ENCODE measurements at regions of chr2 and their contacts with region 1.

Region 1: DNA sequence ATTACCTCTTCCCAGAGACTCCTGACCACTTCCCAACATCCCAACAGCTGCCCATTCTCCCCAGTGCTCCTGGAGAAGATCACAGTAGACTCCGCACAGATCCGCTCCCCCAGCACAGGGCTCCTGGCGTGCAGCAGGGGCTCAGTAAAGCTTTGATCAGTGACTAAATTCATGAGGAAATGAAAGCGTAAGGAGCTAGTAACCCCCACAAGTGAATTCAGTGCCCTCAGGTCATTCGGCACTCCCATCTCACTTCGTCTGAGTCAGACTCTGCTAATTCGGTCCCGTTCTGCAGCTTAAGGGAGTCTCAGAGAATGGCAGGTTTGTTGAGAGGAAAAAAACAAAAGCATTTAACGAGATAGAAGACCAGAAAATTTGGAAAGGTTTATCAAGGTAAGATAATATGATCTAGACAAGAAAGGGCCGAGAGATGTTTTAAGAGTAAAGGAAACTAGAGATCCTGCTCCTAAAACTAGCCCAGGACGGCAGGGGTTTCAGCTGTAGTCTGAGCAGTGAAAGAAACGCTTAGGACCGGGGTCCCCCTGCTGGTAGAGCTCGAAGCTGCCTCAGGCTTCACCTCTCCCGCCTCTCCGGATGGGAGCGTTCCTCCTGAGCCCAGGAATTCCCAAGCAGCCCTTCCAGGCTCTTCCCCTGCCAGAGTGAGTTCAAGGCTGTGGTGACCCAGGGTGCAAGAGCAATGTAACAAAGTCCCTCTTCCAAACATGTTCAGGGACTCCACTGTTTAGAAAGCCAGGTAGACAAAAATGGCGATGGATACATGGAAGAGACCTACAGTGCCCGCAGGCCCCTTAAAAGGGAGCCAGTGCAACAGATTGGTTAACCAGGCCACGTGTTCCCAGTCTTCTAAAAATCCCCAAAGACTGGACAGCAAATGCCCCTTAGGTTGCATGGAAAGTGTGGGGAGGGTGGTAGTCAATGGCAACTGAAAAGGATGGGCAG is 127.3 kb downstream of the DNER start:
- DNase-seq: peak; percentile 76 to 80
- ATAC-seq: peak; percentile 93 to 97 (median 96)
- H3K4me3 ChIP-seq: peak overlapping the region in 6 of 10 donors; percentile 1 to 39 (median 36)
- H3K27ac ChIP-seq: no peak overlapping the region
- H3K4me1 ChIP-seq: peaks cover 0 to 8% (median 0%) of the 10 kb centered on the region in 9 donors
- H3K27me3 ChIP-seq: peaks cover 0 to 15% (median 0%) of the 10 kb centered on the region in 7 donors
- CTCF ChIP-seq: peak; percentile 73 to 93 (median 89)

Region 2: DNA sequence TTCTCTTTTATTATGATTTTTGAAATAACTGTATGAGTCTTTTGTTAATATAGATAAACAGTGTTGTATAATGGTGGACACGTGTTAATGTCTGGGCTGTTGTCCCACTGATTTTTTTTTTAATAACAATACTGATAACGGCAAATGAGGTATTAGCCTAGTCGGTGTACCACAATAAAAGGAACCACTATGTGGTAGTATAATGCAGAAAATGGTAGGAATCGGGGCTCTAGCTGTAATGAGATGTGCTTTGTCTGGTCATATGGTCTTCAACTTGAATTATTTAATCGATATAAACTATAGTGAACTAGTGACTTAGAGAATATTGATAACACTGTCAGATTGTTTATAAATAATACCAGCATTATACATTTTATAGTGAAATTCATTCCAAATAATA is 887.6 kb before region 1 on chr2:
- intact Hi-C with region 1: loop called in 4 of 10 experiments (anchors 5 to 10 kb)
- DNase-seq: no peak
- ATAC-seq: peak in 5 of 8 donors; percentile 52 to 80 (median 66)
- H3K4me3 ChIP-seq: no peak overlapping the region
- H3K27ac ChIP-seq: no peak overlapping the region
- H3K4me1 ChIP-seq: no peaks in the 10 kb centered on the region
- H3K27me3 ChIP-seq: no peaks in the 10 kb centered on the region
- CTCF ChIP-seq: peak in 8 of 9 donors; percentile 8 to 59 (median 42)

Region 3: DNA sequence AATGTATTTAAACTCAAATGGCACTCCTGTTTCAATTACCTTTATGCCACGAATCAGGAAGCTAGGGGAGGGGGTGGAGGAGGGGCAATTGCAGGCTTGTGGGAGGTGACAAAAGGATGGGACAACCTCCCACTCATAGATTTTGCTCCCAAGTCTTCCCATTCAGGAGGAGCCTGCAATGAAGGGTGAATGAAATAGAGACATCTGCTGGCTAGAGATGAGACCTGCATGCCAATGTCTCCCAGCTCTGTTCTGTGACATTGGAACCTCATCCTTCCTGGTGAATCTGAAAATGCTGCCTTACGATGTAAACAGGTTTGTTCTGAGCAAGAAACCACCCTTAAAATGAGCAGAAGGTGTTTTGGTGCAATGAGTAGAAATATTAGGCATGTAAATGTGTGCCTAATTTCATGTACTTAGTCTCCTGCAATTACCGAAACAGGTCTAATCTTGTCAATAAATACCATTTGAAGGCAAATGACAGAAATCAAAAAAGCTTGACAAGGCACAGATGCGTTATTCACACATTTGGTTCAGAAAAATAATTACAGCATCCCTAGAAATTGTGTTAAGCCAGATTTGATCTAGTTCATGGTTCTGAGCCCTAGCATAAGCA is 313.2 kb before region 1 on chr2:
- intact Hi-C with region 1: loop called in 2 of 10 experiments (anchors 10 kb)
- DNase-seq: peak; percentile 16 to 64
- ATAC-seq: peak; percentile 59 to 83 (median 80)
- H3K4me3 ChIP-seq: peak overlapping the region in 7 of 10 donors; percentile 23 to 44 (median 37)
- H3K27ac ChIP-seq: no peak overlapping the region
- H3K4me1 ChIP-seq: peaks cover 0 to 13% (median 3%) of the 10 kb centered on the region in 9 donors
- H3K27me3 ChIP-seq: peaks cover 0 to 37% (median 10%) of the 10 kb centered on the region in 7 donors
- CTCF ChIP-seq: peak; percentile 26 to 85 (median 77)

Region 4: GRCh38 chr2:229407170-229407569 is 179.9 kb before region 1 on chr2:
- intact Hi-C with region 1: no loop called
- DNase-seq: peak; percentile 58 to 63
- ATAC-seq: peak; percentile 78 to 94 (median 89)
- H3K4me3 ChIP-seq: no peak overlapping the region
- H3K27ac ChIP-seq: peak overlapping the region; percentile 18 to 84 (median 66)
- H3K4me1 ChIP-seq: peaks cover 0 to 38% (median 21%) of the 10 kb centered on the region in 9 donors
- H3K27me3 ChIP-seq: no peaks in the 10 kb centered on the region
- CTCF ChIP-seq: no peak

Region 5: GRCh38 chr2:229425598-229425997 is 161.4 kb before region 1 on chr2:
- intact Hi-C with region 1: loop called in 6 of 10 experiments (anchors 2 to 5 kb)
- DNase-seq: no peak
- ATAC-seq: no peak
- H3K4me3 ChIP-seq: no peak overlapping the region
- H3K27ac ChIP-seq: no peak overlapping the region
- H3K4me1 ChIP-seq: peaks cover 0 to 10% (median 0%) of the 10 kb centered on the region in 9 donors
- H3K27me3 ChIP-seq: no peaks in the 10 kb centered on the region
- CTCF ChIP-seq: no peak

Region 6: GRCh38 chr2:229445019-229445418 is 142.0 kb before region 1 on chr2:
- intact Hi-C with region 1: loop called in 1 of 10 experiments (anchors 5 kb)
- DNase-seq: peak; percentile 18 to 40
- ATAC-seq: peak; percentile 73 to 92 (median 83)
- H3K4me3 ChIP-seq: peak overlapping the region in 2 of 10 donors; percentile 14 to 20
- H3K27ac ChIP-seq: peak overlapping the region; percentile 41 to 85 (median 75)
- H3K4me1 ChIP-seq: peaks cover 0 to 41% (median 18%) of the 10 kb centered on the region in 9 donors
- H3K27me3 ChIP-seq: no peaks in the 10 kb centered on the region
- CTCF ChIP-seq: no peak

Region 7: GRCh38 chr2:229673676-229674075 is 86.7 kb after region 1 on chr2:
- intact Hi-C with region 1: no loop called
- DNase-seq: no peak
- ATAC-seq: no peak
- H3K4me3 ChIP-seq: no peak overlapping the region
- H3K27ac ChIP-seq: no peak overlapping the region
- H3K4me1 ChIP-seq: no peaks in the 10 kb centered on the region
- H3K27me3 ChIP-seq: peaks cover 0 to 36% (median 23%) of the 10 kb centered on the region in 7 donors
- CTCF ChIP-seq: no peak

Measured in heart right ventricle (tissue), 16 donors.